K562 (cell line): ENCODE measurements at regions of chr14 and their contacts with region 1.

Region 1: DNA sequence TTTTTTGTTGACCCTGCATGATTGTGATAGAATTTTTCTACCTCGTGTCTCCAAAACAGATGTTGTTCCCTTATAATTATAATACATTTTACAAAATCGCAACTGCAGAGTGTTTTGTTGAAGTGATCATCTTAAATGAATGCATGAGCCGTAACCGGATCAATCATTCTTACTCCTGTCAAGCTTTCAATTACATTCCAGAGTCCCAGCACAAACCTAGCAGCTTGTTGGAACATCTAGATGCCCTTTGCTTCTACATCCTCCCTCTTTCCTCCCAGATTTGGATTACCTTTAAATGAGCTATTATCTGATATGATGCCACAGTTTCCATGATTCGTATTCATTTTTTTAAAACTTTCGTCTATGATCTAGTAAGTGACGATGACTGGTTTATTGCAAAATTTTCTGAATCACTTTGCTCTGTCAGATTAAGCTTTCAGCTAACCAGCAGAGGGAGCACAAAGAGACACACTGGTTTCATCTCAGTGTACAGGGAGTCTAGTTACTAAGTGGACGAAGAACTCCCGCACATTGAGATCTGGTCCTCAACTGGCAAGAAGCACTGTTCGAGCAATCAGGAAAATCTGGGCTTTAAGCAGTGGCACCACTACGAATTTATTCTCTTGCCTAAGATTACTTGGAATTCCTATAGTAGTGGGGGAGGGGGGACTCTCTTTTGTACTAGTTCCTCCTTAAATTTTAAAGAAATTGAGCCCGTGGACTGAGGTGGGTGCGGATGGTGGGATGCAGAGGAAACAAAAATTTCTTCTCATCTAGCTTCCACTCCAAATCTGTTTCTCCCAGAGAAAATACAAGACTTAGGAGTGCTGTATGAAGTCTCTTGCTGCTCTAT is 40.9 kb downstream of the TSHR start:
- DNase-seq: peak; percentile 15 to 68 (median 42)
- ATAC-seq: peak; percentile 97
- H3K4me3 ChIP-seq: no peak overlapping the region
- H3K27ac ChIP-seq: no peak overlapping the region
- H3K4me1 ChIP-seq: no peaks in the 10 kb centered on the region; a peak in 1 of 5 replicates
- H3K27me3 ChIP-seq: no peaks in the 10 kb centered on the region
- CTCF ChIP-seq: peak; percentile 56 to 66 (median 58)
- EP300 ChIP-seq: no peak
- POLR2A ChIP-seq: no peak
- RAD21 ChIP-seq: peak; percentile 75 to 82

Region 2: GRCh38 chr14:81062816-81063215 is 66.5 kb after region 1 on chr14:
- CTCF ChIA-PET with region 1: no interaction called
- POLR2A ChIA-PET with region 1: no interaction called
- in situ Hi-C with region 1: no loop called
- intact Hi-C with region 1: loop called (anchors 1 kb)
- DNase-seq: peak; percentile 5 to 38 (median 19)
- ATAC-seq: peak; percentile 90
- H3K4me3 ChIP-seq: no peak overlapping the region
- H3K27ac ChIP-seq: no peak overlapping the region
- H3K4me1 ChIP-seq: no peaks in the 10 kb centered on the region
- H3K27me3 ChIP-seq: no peaks in the 10 kb centered on the region; a peak in 1 of 5 replicates
- CTCF ChIP-seq: peak; percentile 46 to 60 (median 57)
- EP300 ChIP-seq: no peak
- POLR2A ChIP-seq: no peak
- RAD21 ChIP-seq: peak; percentile 55 to 73

Region 3: DNA sequence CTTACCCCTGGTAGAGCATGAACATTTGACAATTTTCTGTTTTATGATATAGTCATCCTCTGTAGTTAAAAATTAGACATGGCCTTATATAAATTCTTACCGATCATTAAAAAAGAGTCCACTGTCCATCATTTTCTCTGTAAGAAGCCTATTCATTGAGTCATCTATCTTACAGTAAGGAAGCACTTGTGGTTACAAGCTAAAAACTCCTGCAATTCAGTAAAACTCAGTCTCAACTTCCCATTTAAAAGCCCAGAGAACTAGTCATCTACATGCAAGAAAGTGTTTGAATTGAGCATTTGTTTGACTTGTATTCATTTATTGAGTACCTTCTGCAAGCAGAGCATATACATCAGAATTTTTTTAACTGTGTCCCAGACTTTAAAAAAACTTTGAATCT is 161.2 kb after region 1 on chr14:
- CTCF ChIA-PET with region 1: interaction called, 4 read pairs
- POLR2A ChIA-PET with region 1: no interaction called
- in situ Hi-C with region 1: loop called (anchors 5 kb)
- intact Hi-C with region 1: no loop called
- DNase-seq: no peak
- ATAC-seq: no peak
- H3K4me3 ChIP-seq: no peak overlapping the region
- H3K27ac ChIP-seq: no peak overlapping the region
- H3K4me1 ChIP-seq: peaks cover 0 to 4% of the 10 kb centered on the region in 2 experiments; a peak in 2 of 5 replicates
- H3K27me3 ChIP-seq: no peaks in the 10 kb centered on the region
- CTCF ChIP-seq: no peak
- EP300 ChIP-seq: no peak
- POLR2A ChIP-seq: no peak
- RAD21 ChIP-seq: no peak

Region 4: DNA sequence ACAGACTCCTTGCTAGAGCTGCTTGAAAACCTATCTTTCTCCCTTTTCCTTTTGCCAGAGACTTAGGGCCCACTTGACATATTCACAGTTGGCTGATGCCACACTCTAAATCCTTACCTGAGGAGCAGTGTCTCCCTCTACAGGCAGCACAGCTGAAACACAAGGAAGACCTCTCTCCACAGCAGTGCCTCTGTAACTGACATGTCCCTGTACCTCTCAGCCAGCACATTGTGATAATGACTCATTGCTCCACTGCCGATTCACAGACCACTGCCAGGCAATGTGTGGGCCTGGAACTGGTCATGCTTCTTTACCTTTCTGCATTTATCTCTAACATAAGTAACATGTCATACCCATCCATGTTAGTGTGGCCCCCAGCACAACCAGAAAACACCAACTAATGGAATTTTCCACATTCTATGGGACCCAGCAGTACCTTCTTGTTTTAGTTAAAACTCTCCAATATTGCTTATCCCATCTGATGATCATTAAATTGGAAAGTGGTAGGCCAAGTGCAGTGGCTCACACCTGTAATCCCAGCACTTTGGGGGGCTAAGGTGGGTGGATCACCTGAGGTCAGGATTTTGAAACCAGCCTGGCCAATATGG is 168.0 kb after region 1 on chr14:
- CTCF ChIA-PET with region 1: interaction called, 4 read pairs
- POLR2A ChIA-PET with region 1: no interaction called
- in situ Hi-C with region 1: loop called (anchors 5 kb)
- intact Hi-C with region 1: loop called (anchors 2 kb)
- DNase-seq: peak; percentile 33 to 82 (median 49)
- ATAC-seq: peak; percentile 96
- H3K4me3 ChIP-seq: no peak overlapping the region
- H3K27ac ChIP-seq: peak overlapping the region; percentile 23; the same call in 2 of the 3 replicates
- H3K4me1 ChIP-seq: peaks cover 0 to 22% of the 10 kb centered on the region in 2 experiments; a peak in 3 of 5 replicates
- H3K27me3 ChIP-seq: no peaks in the 10 kb centered on the region
- CTCF ChIP-seq: peak; percentile 72 to 75 (median 75)
- EP300 ChIP-seq: no peak
- POLR2A ChIP-seq: no peak
- RAD21 ChIP-seq: peak; percentile 58 to 79

Region 5: DNA sequence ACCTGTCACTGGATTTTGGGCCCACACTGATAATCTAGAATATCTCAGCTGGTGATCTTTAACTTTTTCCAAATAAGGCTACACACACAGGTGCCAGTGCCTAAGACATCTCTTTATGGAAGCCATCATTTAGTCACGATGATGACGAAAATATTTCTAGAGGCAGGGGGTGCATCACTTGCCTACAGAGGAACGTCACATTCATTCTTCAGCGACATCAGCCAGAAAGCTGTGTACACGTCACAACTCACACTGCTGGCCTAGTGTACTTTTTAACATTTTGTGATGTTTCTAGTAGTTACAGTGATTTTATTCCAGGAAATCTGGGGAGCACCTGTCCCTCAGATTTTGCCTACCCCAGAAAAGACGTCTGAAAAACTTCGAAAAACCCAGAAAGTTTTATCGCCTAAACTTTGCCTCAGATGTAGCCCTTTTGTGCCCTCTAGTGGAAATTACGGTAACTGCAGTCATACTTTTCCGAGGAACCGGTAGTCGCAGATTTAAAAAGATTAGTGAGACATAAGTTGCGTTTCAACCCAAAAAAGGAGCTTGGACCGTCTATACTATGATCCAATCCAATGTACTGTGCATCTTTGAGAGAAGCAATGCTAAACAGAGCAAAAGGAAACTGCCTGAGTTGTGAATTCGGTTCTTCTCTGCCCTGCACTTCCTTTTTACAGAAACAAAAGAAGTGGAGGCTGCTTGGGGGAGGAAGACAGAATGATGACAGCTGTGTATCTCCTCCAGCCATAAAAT is 468.1 kb after region 1 on chr14:
- CTCF ChIA-PET with region 1: interaction called, 7 read pairs
- POLR2A ChIA-PET with region 1: no interaction called
- in situ Hi-C with region 1: loop called (anchors 25 kb)
- intact Hi-C with region 1: loop called (anchors 2 kb)
- DNase-seq: peak; percentile 41 to 74 (median 48)
- ATAC-seq: peak; percentile 77
- H3K4me3 ChIP-seq: peak overlapping the region; percentile 29
- H3K27ac ChIP-seq: peak overlapping the region; percentile 72; the same call in 2 of the 3 replicates
- H3K4me1 ChIP-seq: no peaks in the 10 kb centered on the region
- H3K27me3 ChIP-seq: no peaks in the 10 kb centered on the region; a peak in 1 of 5 replicates
- CTCF ChIP-seq: peak; percentile 69 to 86 (median 78)
- EP300 ChIP-seq: no peak
- POLR2A ChIP-seq: no peak
- RAD21 ChIP-seq: peak; percentile 83 to 87

Region 6: DNA sequence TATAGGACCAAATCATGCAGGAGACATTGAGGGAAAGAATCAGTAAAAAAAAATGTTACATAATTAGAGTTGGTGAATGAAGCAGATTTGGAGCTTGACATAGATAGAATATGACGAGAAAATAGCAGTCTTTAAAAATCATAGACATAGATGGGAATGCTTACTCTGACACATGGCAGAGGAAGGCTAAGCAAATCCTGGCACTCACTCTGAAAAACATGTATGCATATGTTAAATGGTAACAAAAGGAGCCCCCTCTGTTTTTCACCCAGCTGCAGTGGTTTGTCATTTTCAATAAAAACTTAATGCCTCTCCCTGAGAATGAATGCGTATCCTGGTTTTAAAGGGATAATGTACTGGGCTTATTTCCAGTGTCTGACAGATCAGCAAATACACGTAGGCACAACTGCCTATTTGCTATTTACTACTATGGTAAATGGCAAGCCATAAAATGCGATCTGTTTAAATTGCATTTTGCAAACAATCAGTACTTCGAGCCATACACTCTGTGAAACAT is 1098.6 kb after region 1 on chr14:
- CTCF ChIA-PET with region 1: no interaction called
- POLR2A ChIA-PET with region 1: no interaction called
- in situ Hi-C with region 1: no loop called
- intact Hi-C with region 1: no loop called
- DNase-seq: no peak
- ATAC-seq: no peak
- H3K4me3 ChIP-seq: no peak overlapping the region
- H3K27ac ChIP-seq: no peak overlapping the region
- H3K4me1 ChIP-seq: no peaks in the 10 kb centered on the region
- H3K27me3 ChIP-seq: no peaks in the 10 kb centered on the region
- CTCF ChIP-seq: no peak
- EP300 ChIP-seq: no peak
- POLR2A ChIP-seq: no peak
- RAD21 ChIP-seq: no peak